Left lung (tissue), 14 donors: ENCODE measurements at regions of chr10 and their contacts with region 1.

Region 1: GRCh38 chr10:25226775-25227682 is 52.2 kb downstream of the GPR158 start:
- DNase-seq: peak in 2 of 4 donors; percentile 4 to 34
- ATAC-seq: peak; percentile 78
- H3K4me3 ChIP-seq: no peak overlapping the region
- H3K27ac ChIP-seq: no peak overlapping the region
- H3K4me1 ChIP-seq: no peaks in the 10 kb centered on the region
- H3K27me3 ChIP-seq: no peaks in the 10 kb centered on the region
- CTCF ChIP-seq: peak in 1 of 2 donors; percentile 48

Region 2: DNA sequence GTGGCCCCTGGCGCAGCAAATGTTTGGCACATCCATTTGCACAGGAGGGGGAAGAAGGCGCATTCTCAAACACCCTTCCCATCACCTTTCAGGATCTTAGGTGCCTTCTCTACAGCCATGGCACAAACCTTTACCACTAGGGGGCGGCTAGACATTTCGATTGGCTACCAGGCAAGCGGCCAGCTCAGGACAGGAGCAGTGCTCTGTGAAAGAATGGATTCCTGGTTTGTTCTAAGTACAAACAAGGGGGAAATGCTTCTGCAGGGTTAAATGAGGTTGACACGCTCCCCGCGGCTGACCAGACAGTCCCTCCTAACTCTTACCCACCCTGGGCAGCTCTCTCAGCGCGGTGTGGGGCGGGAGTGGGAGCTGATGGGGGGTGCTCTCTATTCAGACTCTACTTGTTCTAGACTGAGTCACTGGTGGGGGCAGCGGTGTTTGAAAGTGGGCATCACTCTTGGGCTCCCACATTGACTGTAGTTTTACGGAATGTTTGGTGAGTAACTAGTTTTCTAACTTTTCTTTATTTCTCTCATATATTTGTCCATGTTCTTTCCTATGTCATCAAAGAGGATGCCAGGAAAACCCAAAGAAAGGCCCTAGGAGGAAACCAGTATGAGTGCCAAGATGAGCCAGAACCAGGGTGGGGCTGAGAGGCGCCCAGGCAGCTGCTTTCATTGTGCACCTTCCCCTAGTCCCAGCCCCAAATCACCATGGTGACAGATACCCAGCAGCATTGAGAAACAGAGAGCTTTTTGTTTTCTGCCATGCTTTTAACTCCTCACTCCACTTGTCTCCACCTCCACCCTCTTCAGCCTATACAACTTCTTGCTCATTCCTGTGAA is 113.6 kb before region 1 on chr10:
- intact Hi-C with region 1: loop called in 1 of 2 experiments (anchors 10 kb)
- DNase-seq: peak; percentile 46 to 75 (median 67)
- ATAC-seq: peak; percentile 97
- H3K4me3 ChIP-seq: no peak overlapping the region
- H3K27ac ChIP-seq: no peak overlapping the region
- H3K4me1 ChIP-seq: no peaks in the 10 kb centered on the region
- H3K27me3 ChIP-seq: peaks cover 0 to 11% of the 10 kb centered on the region in 2 donors
- CTCF ChIP-seq: peak; percentile 65 to 71